Calu3 (cell line): ENCODE measurements at regions of chr7 and their contacts with region 1.

Region 1: DNA sequence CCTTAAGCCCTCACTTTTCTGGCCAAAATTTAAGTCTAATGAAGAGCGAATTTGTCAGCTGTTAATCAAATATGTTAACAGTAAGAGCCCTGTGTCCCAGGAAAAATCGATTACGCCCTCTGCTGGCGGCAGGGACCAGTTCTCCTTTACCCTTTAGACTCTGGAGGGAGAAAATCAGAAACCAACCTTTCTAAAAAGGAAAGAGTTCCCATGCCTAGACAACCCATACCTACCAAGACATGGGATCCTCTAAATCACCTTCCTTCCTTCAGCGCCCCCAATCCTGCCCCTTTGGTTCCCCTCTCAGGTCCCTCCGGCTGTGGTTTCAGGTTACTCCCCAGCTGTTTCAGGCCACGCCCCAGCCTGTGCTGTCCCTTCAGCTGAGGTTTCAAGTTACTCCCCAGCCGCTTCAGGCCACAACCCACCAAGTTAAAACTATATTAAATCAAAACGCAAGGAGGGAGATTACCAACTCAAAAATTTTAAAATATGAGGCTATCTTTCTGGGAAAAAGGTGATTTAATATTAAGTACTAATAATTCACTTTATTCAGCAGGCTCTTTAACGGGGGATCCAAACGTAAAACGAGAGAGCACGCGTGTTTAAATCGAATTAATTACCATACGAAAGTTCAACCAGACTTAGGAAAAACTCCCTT is 1.4 kb upstream of the AKR1B15 start:
- DNase-seq: peak; percentile 83
- H3K4me3 Mint-ChIP-seq: peak overlapping the region; percentile 64
- H3K27ac Mint-ChIP-seq: peak overlapping the region; percentile 54
- H3K4me1 Mint-ChIP-seq: peaks cover 24% of the 10 kb centered on the region
- H3K27me3 Mint-ChIP-seq: no peaks in the 10 kb centered on the region
- CTCF ChIP-seq: peak; percentile 92

Region 2: DNA sequence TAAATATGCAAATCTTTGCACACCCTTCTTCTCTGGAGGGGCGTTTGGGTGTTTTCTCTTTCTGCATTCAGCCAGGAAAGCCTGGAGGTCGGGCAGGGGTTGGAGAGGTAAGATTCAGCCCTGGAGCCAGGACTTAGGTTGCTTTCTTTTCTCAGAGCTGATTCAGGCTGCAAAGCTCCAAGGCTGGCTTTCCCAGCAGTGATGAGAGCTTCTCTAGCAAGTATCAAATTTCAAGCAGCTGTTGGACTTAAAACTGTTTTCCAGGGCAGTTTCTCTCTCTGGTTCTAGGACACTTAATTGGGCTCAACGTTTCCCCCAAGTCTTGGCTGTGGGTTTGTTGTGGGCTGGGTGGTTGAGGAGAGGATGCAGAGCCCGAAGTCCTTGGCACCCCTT is 19.6 kb before region 1 on chr7:
- CTCF ChIA-PET with region 1: interaction called, 11 read pairs
- intact Hi-C with region 1: no loop called
- DNase-seq: no peak
- H3K4me3 Mint-ChIP-seq: peak overlapping the region; percentile 60
- H3K27ac Mint-ChIP-seq: no peak overlapping the region
- H3K4me1 Mint-ChIP-seq: peaks cover 75% of the 10 kb centered on the region
- H3K27me3 Mint-ChIP-seq: no peaks in the 10 kb centered on the region
- CTCF ChIP-seq: no peak